ENCODE measurements at regions of chr2 and their contacts with region 1.

Region 1: DNA sequence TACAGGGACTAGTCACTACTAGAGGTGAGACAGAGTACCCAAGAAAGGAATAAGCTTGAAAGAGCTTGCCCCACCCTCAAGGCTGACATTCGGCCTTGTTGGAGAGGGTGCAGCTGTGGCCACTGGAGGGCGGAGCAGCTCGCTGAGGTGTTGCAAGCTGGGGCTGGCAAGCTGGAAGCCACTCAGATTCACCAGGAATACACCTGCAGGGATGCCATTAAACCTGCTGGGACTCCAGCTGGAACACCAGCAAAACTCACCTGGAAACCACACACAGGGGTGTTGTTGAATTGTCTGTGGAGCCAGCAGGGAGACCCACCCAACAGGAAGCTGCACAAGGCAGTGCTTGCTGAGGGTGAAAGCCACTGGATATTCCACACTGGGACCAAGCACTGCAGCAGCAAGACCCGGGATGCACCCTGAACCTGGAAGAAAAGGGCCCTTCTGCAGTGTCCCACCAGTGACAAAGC is 26.1 kb downstream of the KCTD18 start:
- DNase-seq: peak; percentile 72
- H3K4me3 Mint-ChIP-seq: no peak overlapping the region
- H3K27ac Mint-ChIP-seq: no peak overlapping the region
- H3K4me1 Mint-ChIP-seq: peaks cover 9% of the 10 kb centered on the region
- H3K27me3 Mint-ChIP-seq: no peaks in the 10 kb centered on the region

Region 2: GRCh38 chr2:199979832-199980628 is 503.7 kb before region 1 on chr2:
- intact Hi-C with region 1: loop called (anchors 1 kb)
- DNase-seq: peak; percentile 94
- H3K4me3 Mint-ChIP-seq: no peak overlapping the region
- H3K27ac Mint-ChIP-seq: no peak overlapping the region
- H3K4me1 Mint-ChIP-seq: peaks cover 23% of the 10 kb centered on the region
- H3K27me3 Mint-ChIP-seq: no peaks in the 10 kb centered on the region

Region 3: DNA sequence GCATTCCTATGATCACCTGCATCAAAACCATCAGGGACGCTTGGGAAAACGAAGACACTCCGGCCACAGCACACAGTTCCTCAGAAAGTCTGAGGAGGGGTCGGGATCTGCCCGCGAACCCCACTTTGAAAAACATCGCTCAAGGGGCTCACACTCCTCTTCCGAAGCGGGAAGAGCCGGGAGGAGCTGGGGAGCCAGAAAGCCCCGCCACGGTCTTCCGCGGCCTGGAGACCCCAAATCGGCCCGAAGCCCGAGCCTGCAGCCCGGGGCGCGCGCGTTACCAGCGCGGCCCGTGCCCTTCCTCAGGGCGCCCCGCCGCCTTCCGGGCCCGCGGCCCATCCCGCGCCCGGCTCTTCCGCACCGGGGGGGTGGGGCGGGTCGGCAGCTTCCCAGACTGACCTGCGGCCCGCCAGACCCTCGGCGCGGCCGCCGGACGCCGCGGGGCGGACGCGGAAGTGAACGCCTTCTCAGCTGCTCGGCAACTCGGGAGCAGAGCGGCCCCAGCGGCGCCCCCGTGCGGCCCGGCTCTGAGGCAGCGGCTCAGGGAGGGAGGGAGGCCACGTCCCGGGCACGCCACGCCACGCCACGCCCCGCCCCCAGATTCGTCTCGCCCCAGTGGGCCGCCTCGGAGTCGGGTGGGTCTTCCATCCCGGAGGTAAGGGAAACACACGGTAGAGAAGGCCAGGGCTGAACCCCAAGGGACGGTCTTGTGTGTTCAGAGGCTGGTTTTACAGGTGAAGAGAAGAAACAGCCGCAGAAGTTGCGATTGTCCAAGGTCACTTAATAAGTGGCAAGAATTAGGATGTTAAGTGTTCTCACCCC is 26.1 kb after region 1 on chr2 and contains the start of gene KCTD18:
- intact Hi-C with region 1: loop called (anchors 2 kb)
- DNase-seq: peak; percentile 98
- H3K4me3 Mint-ChIP-seq: peak within 1 kb of the TSS; percentile 96
- H3K27ac Mint-ChIP-seq: peak within 1 kb of the TSS; percentile 91
- H3K4me1 Mint-ChIP-seq: peaks cover 21% of the 10 kb centered on the region
- H3K27me3 Mint-ChIP-seq: no peaks in the 10 kb centered on the region
- total RNA-seq, gene KCTD18: 13.3 and 14.2 TPM in 2 replicates